Naive thymus-derived CD4-positive, alpha-beta T cell (primary cell): ENCODE measurements at regions of chr14 and their contacts with region 1.

Region 1: GRCh38 chr14:67816326-67817002 is at the start of gene ZFYVE26:
- DNase-seq: peak; percentile 55 to 93 (median 87)
- ATAC-seq: peak; percentile 96
- H3K4me3 ChIP-seq: peak within 1 kb of the TSS; percentile 91
- H3K4me3 Mint-ChIP-seq: peak within 1 kb of the TSS; percentile 87 to 99 (median 98)
- H3K27ac ChIP-seq: peak within 1 kb of the TSS; percentile 76
- H3K27ac Mint-ChIP-seq: peak within 1 kb of the TSS; percentile 91 to 99 (median 98)
- H3K4me1 ChIP-seq: peaks cover 11 to 15% of the 10 kb centered on the region in 2 donors
- H3K4me1 Mint-ChIP-seq: peaks cover 24 to 73% (median 65%) of the 10 kb centered on the region in 7 donors
- H3K27me3 ChIP-seq: no peaks in the 10 kb centered on the region
- H3K27me3 Mint-ChIP-seq: no peaks in the 10 kb centered on the region
- total RNA-seq, gene ZFYVE26: 25.0 to 38.9 (median 31.1) TPM

Region 2: DNA sequence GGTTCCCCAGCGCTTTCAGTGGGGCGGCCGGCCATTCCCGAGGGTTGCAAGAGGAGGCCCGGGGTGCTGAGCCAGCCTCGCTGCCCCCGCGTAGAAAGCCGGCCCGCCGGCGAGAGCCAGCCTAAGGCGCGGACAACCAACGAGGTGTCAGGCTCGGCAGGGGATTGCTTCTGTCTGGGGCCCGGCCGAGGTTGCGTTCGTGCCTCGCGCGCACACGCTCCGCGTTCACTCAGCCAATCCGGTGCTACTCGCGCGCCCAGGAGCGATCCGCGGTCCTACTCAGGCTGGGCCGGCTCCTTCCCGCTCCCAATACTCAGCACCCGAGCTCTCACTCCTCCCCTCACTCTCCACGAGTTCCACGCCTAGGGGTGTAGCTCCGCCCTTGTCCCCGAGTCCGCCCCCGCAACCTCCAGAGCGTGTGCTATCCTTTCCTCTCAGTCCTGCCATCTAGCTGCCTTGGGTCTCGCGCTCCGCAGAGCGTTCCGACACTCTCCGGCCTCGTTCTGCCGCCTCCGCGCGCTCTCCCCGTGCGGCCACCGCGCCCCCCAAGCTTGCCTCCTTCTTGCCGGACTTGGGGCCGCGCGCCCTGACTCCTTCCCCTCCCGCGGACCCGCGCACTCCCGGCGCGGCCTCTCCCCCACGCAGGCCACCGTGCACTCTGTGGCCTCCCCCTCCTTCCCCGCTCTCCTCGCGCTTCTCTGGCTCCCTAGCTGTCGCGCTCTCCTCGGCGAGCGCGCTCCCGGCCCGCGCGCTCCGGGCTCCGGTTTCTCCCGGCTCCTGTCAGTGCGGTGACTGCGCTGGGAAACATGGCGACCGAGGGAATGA is 1308.5 kb before region 1 on chr14 and contains the start of gene GPHN:
- CTCF ChIA-PET with region 1: no interaction called
- POLR2A ChIA-PET with region 1: no interaction called
- intact Hi-C with region 1: loop called in 1 of 2 experiments (anchors 5 kb)
- DNase-seq: peak; percentile 62 to 87 (median 82)
- ATAC-seq: peak; percentile 93
- H3K4me3 ChIP-seq: peak within 1 kb of the TSS; percentile 78
- H3K4me3 Mint-ChIP-seq: peak within 1 kb of the TSS; percentile 94 to 100 (median 99)
- H3K27ac ChIP-seq: peak within 1 kb of the TSS; percentile 70
- H3K27ac Mint-ChIP-seq: peak within 1 kb of the TSS; percentile 71 to 96 (median 91)
- H3K4me1 ChIP-seq: peaks cover 6 to 7% of the 10 kb centered on the region in 2 donors
- H3K4me1 Mint-ChIP-seq: peaks cover 16 to 42% (median 34%) of the 10 kb centered on the region in 7 donors
- H3K27me3 ChIP-seq: no peaks in the 10 kb centered on the region
- H3K27me3 Mint-ChIP-seq: peaks cover 0 to 29% (median 0%) of the 10 kb centered on the region in 5 donors
- total RNA-seq, gene GPHN: 11.8 to 28.1 (median 14.8) TPM

Region 3: DNA sequence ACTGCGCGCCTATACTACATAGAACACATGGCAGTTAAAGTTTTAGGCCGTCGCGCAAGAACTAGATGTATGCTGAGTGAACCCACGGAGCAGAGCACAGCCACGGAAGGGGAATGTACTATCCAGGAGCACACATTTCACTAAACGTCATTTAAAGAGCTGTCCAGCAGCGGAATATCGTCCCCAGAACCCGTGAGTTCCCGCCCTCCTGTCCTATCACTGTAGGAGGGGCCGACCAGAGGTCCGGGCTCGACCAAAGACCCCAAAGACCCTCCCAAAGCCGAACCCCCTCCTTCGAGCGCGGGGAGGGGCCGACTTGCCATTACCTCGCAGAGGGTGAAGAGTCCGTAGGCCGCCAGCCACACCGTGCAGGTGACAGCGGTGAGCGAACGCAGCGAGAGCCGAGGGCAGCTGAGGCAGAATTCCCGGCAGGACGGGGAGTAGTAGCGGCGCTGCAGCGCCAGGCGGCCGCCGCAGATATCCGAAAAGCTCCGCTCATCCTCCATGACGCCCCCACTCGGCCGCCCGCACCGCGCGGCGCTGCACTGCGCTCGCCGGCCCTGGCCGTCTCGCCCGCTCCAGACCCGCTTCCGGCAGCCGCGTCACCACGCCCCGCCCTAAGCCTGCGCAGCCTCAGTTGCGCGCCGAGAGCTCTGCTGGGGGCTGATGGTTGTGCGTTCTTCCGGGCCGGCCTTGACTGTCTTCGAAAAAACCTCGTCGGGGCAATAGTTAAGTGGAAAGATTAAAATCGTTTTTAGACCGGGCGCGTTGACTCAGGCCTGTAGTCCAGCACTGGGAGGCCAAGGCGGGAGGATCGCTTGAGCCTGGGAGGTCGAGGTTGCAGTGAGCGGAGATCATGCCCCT is 216.5 kb before region 1 on chr14 and contains the start of gene PIGH:
- CTCF ChIA-PET with region 1: no interaction called
- POLR2A ChIA-PET with region 1: interaction called, 3 read pairs
- intact Hi-C with region 1: loop called (anchors 1 to 5 kb)
- DNase-seq: peak; percentile 89 to 96 (median 94)
- ATAC-seq: peak; percentile 98
- H3K4me3 ChIP-seq: peak within 1 kb of the TSS; percentile 70
- H3K4me3 Mint-ChIP-seq: peak within 1 kb of the TSS; percentile 87 to 100 (median 98)
- H3K27ac ChIP-seq: peak within 1 kb of the TSS; percentile 86
- H3K27ac Mint-ChIP-seq: peak within 1 kb of the TSS; percentile 87 to 99 (median 97)
- H3K4me1 ChIP-seq: peaks cover 16 to 22% of the 10 kb centered on the region in 2 donors
- H3K4me1 Mint-ChIP-seq: peaks cover 26 to 57% (median 46%) of the 10 kb centered on the region in 7 donors
- H3K27me3 ChIP-seq: no peaks in the 10 kb centered on the region
- H3K27me3 Mint-ChIP-seq: peaks cover 0 to 10% (median 0%) of the 10 kb centered on the region in 5 donors
- total RNA-seq, gene PIGH: 14.3 to 42.1 (median 34.5) TPM

Region 4: DNA sequence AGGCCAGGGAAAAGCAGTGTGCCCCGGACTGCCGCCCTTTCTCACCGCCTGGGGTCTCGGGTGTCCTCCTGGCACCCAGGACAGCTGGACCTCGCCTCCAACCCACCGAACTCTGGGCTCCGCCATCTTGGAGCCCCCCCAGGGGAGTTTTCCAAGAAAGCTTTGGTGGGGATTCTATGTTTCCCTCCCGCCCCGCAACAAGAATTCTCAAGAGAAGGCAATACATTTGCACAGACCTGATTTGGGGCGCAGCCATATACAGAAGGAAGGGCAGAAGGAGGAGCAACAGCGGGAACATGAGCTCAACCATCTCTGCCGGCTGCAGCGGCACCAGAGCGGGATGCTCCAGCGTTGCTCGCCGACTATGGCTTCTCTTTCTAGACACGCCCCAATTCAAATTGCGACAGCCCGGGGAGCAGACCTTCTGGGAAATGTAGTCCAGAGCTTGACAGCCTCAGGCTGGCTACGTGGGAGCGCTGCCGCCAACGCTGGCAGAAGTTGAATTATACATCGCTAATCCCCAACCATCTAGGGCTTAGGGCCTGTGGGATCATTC is 121.0 kb before region 1 on chr14 and contains the start of gene RDH11:
- CTCF ChIA-PET with region 1: no interaction called
- POLR2A ChIA-PET with region 1: no interaction called
- intact Hi-C with region 1: loop called (anchors 1 kb)
- DNase-seq: peak; percentile 53 to 89 (median 82)
- ATAC-seq: peak; percentile 97
- H3K4me3 ChIP-seq: peak within 1 kb of the TSS; percentile 88
- H3K4me3 Mint-ChIP-seq: peak within 1 kb of the TSS; percentile 87 to 98 (median 92)
- H3K27ac ChIP-seq: peak within 1 kb of the TSS; percentile 75
- H3K27ac Mint-ChIP-seq: peak within 1 kb of the TSS; percentile 66 to 95 (median 87)
- H3K4me1 ChIP-seq: peaks cover 0 to 3% of the 10 kb centered on the region in 2 donors
- H3K4me1 Mint-ChIP-seq: peaks cover 12 to 32% (median 21%) of the 10 kb centered on the region in 7 donors
- H3K27me3 ChIP-seq: no peaks in the 10 kb centered on the region
- H3K27me3 Mint-ChIP-seq: no peaks in the 10 kb centered on the region
- total RNA-seq, gene RDH11: 22.3 to 44.5 (median 42.6) TPM

Region 5: GRCh38 chr14:67784244-67784823 is 32.1 kb before region 1 on chr14:
- CTCF ChIA-PET with region 1: no interaction called
- POLR2A ChIA-PET with region 1: no interaction called
- intact Hi-C with region 1: no loop called
- DNase-seq: no peak
- ATAC-seq: no peak
- H3K4me3 ChIP-seq: no peak overlapping the region
- H3K4me3 Mint-ChIP-seq: no peak overlapping the region
- H3K27ac ChIP-seq: no peak overlapping the region
- H3K27ac Mint-ChIP-seq: peak overlapping the region in 2 of 9 donors; percentile 23 to 31
- H3K4me1 ChIP-seq: no peaks in the 10 kb centered on the region
- H3K4me1 Mint-ChIP-seq: no peaks in the 10 kb centered on the region
- H3K27me3 ChIP-seq: no peaks in the 10 kb centered on the region
- H3K27me3 Mint-ChIP-seq: no peaks in the 10 kb centered on the region

Region 6: GRCh38 chr14:68795597-68796417 is 979.3 kb after region 1 on chr14:
- CTCF ChIA-PET with region 1: no interaction called
- POLR2A ChIA-PET with region 1: interaction called, 7 read pairs
- intact Hi-C with region 1: loop called (anchors 5 kb)
- DNase-seq: peak; percentile 77 to 92 (median 86)
- ATAC-seq: peak; percentile 56
- H3K4me3 ChIP-seq: peak overlapping the region; percentile 91
- H3K4me3 Mint-ChIP-seq: peak overlapping the region; percentile 92 to 99 (median 95)
- H3K27ac ChIP-seq: peak overlapping the region; percentile 100
- H3K27ac Mint-ChIP-seq: peak overlapping the region; percentile 91 to 100 (median 98)
- H3K4me1 ChIP-seq: peaks cover 11 to 18% of the 10 kb centered on the region in 2 donors
- H3K4me1 Mint-ChIP-seq: peaks cover 9 to 37% (median 31%) of the 10 kb centered on the region in 7 donors
- H3K27me3 ChIP-seq: no peaks in the 10 kb centered on the region
- H3K27me3 Mint-ChIP-seq: peaks cover 0 to 4% (median 0%) of the 10 kb centered on the region in 5 donors

Region 7: GRCh38 chr14:69191340-69192111 is 1375.1 kb after region 1 on chr14 and contains the start of gene EXD2:
- CTCF ChIA-PET with region 1: no interaction called
- POLR2A ChIA-PET with region 1: interaction called, 3 read pairs
- intact Hi-C with region 1: loop called in 1 of 2 experiments (anchors 5 kb)
- DNase-seq: peak; percentile 27 to 68 (median 61)
- ATAC-seq: peak; percentile 81
- H3K4me3 ChIP-seq: peak within 1 kb of the TSS; percentile 71
- H3K4me3 Mint-ChIP-seq: peak within 1 kb of the TSS; percentile 91 to 97 (median 94)
- H3K27ac ChIP-seq: peak within 1 kb of the TSS; percentile 70
- H3K27ac Mint-ChIP-seq: peak within 1 kb of the TSS; percentile 80 to 96 (median 92)
- H3K4me1 ChIP-seq: peaks cover 0 to 6% of the 10 kb centered on the region in 2 donors
- H3K4me1 Mint-ChIP-seq: peaks cover 16 to 44% (median 38%) of the 10 kb centered on the region in 7 donors
- H3K27me3 ChIP-seq: no peaks in the 10 kb centered on the region
- H3K27me3 Mint-ChIP-seq: peaks cover 0 to 14% (median 0%) of the 10 kb centered on the region in 5 donors
- total RNA-seq, gene EXD2: 4.8 to 17.2 (median 10.6) TPM

Region 8: DNA sequence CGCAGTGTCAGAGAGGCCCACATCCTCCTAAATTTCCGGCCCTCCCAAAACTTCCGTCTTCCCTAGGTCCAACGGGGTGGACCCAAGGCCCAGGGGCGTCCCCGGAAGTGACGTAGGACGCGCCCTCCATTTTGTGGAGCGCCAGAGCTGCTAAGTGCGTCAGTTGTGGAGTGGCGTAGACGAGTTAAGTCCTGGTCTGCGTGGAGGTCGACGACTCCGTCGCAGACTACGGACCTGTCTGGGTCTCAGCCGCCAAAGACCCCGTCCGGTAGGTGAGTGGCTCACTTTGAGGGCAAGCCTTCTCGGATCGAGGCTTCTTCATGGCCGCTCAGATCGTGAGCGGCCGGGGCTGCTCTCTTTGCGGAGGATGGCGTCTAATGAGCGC is 1950.5 kb after region 1 on chr14 and contains the start of gene SRSF5:
- CTCF ChIA-PET with region 1: no interaction called
- POLR2A ChIA-PET with region 1: no interaction called
- intact Hi-C with region 1: loop called (anchors 2 kb)
- DNase-seq: peak; percentile 88 to 95 (median 93)
- ATAC-seq: peak; percentile 90
- H3K4me3 ChIP-seq: peak within 1 kb of the TSS; percentile 100
- H3K4me3 Mint-ChIP-seq: peak within 1 kb of the TSS; percentile 94 to 100 (median 99)
- H3K27ac ChIP-seq: peak within 1 kb of the TSS; percentile 100
- H3K27ac Mint-ChIP-seq: peak within 1 kb of the TSS; percentile 100
- H3K4me1 ChIP-seq: peaks cover 33 to 50% of the 10 kb centered on the region in 2 donors
- H3K4me1 Mint-ChIP-seq: peaks cover 49 to 86% (median 78%) of the 10 kb centered on the region in 7 donors
- H3K27me3 ChIP-seq: no peaks in the 10 kb centered on the region
- H3K27me3 Mint-ChIP-seq: peaks cover 0 to 4% (median 0%) of the 10 kb centered on the region in 5 donors
- total RNA-seq, gene SRSF5: 355 to 1,361 (median 1,191) TPM